PC-3 (cell line): ENCODE measurements at regions of chr2 and their contacts with region 1.

Region 1: GRCh38 chr2:27016801-27017325 is 15.9 kb upstream of the TMEM214 start:
- DNase-seq: peak; percentile 81
- ATAC-seq: peak; percentile 29
- H3K4me3 ChIP-seq: no peak overlapping the region
- H3K27ac ChIP-seq: peak overlapping the region; percentile 86
- H3K4me1 ChIP-seq: peaks cover 42% of the 10 kb centered on the region
- H3K27me3 ChIP-seq: no peaks in the 10 kb centered on the region
- CTCF ChIP-seq: peak; percentile 88

Region 2: GRCh38 chr2:26846328-26847306 is 170.2 kb before region 1 on chr2:
- CTCF ChIA-PET with region 1: interaction called, 17 read pairs
- POLR2A ChIA-PET with region 1: no interaction called
- intact Hi-C with region 1: loop called (anchors 1 kb)
- DNase-seq: peak; percentile 85
- ATAC-seq: peak; percentile 85
- H3K4me3 ChIP-seq: no peak overlapping the region
- H3K27ac ChIP-seq: no peak overlapping the region
- H3K4me1 ChIP-seq: peaks cover 10% of the 10 kb centered on the region; the same call in 1 of the 2 replicates
- H3K27me3 ChIP-seq: peaks cover 81% of the 10 kb centered on the region
- CTCF ChIP-seq: peak; percentile 88

Region 3: GRCh38 chr2:26959331-26959730 is 57.5 kb before region 1 on chr2:
- CTCF ChIA-PET with region 1: interaction called, 59 read pairs
- POLR2A ChIA-PET with region 1: no interaction called
- intact Hi-C with region 1: loop called (anchors 1 kb)
- DNase-seq: no peak
- ATAC-seq: no peak
- H3K4me3 ChIP-seq: no peak overlapping the region
- H3K27ac ChIP-seq: no peak overlapping the region
- H3K4me1 ChIP-seq: no peaks in the 10 kb centered on the region
- H3K27me3 ChIP-seq: peaks cover 21% of the 10 kb centered on the region; the same call in 1 of the 2 replicates
- CTCF ChIP-seq: no peak

Region 4: DNA sequence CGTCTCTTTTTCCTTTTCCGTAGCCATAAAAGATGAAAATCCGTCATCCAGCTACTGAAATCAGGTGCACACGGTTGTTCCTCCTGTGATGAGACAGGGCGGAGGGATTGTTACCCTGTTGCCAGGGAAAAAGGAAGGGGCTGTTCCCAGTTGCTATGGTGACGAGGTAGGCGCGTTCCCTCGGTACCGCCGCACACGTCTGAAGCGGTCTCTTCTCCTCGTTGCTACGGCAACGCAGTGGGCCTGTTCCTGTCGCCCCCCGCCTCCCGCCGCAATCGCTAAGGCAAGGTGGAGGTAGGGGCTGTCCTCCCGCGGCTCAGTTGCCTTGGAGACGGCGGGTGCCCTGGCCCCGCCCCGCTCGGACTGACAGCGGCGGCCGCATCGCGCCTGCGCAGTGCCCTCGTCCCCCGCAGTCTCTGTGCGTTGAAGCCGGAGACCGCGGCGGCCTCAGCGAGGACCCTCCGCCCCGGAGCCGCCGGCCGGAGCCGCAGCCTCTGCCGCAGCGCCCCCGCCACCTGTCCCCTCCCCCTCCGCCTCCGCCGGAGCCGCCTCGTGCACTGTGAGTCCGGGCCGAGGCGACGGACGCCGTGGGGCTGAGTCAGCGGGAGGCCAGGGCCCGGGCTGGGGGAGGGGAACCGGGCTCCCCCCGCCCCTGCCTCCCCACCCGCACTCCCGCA is 46.5 kb before region 1 on chr2 and contains the start of gene MAPRE3:
- CTCF ChIA-PET with region 1: interaction called, 10 read pairs
- POLR2A ChIA-PET with region 1: interaction called, 5 read pairs
- intact Hi-C with region 1: no loop called
- DNase-seq: peak; percentile 76
- ATAC-seq: peak; percentile 77
- H3K4me3 ChIP-seq: peak within 1 kb of the TSS; percentile 93
- H3K27ac ChIP-seq: peak within 1 kb of the TSS; percentile 98
- H3K4me1 ChIP-seq: peaks cover 49% of the 10 kb centered on the region
- H3K27me3 ChIP-seq: no peaks in the 10 kb centered on the region
- CTCF ChIP-seq: no peak
- total RNA-seq, gene MAPRE3: 11.9 and 15.6 TPM in 2 replicates

Region 5: DNA sequence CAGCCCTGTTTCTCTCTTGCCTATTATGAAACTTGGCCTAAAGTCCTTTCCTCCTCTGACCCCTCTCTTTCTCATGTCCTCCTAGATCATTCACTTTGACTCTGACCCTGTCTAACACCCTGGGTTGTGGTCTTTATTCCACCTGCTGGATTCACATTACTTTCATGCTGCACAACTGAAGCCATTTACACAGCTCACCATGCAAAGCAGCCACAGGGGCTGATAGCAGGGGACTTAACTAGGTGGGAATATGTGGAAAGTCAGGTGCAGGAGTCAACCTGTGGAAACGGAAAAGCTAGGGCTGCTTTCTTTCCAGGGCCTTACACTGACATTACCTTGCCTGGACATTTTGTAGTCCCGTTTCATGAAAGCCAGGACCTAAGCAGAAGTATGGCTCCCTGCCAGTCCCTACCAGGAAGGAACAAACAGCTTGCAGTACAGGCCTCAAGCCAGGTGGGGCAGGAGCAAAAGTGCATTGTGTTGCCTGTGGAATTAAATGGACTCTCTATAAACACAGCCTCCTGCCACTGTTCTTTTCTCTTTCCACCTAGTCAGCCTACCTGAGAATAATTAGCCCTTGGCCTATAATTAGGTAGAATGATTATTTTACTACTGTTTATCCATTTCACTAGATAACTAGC is 34.6 kb before region 1 on chr2:
- CTCF ChIA-PET with region 1: no interaction called
- POLR2A ChIA-PET with region 1: no interaction called
- intact Hi-C with region 1: loop called (anchors 2 kb)
- DNase-seq: peak; percentile 80
- ATAC-seq: peak; percentile 92
- H3K4me3 ChIP-seq: no peak overlapping the region
- H3K27ac ChIP-seq: 0 out of 2 replicates have a peak overlapping the region, but pooled peaks have one; percentile 5
- H3K4me1 ChIP-seq: peaks cover 29% of the 10 kb centered on the region
- H3K27me3 ChIP-seq: no peaks in the 10 kb centered on the region
- CTCF ChIP-seq: peak; percentile 42; the same call in 1 of the 2 replicates

Region 6: GRCh38 chr2:27050281-27050995 is 33.6 kb after region 1 on chr2:
- CTCF ChIA-PET with region 1: no interaction called
- POLR2A ChIA-PET with region 1: no interaction called
- intact Hi-C with region 1: loop called (anchors 2 kb)
- DNase-seq: peak; percentile 97
- ATAC-seq: peak; percentile 64
- H3K4me3 ChIP-seq: peak overlapping the region; percentile 77
- H3K27ac ChIP-seq: peak overlapping the region; percentile 52
- H3K4me1 ChIP-seq: peaks cover 17% of the 10 kb centered on the region
- H3K27me3 ChIP-seq: no peaks in the 10 kb centered on the region
- CTCF ChIP-seq: no peak; the same call in 1 of the 2 replicates